Activated CD4-positive, alpha-beta T cell treated with anti-CD3 and anti-CD28 coated beads for 36 hours (primary cell): ENCODE measurements at regions of chr3 and their contacts with region 1.

Region 1: DNA sequence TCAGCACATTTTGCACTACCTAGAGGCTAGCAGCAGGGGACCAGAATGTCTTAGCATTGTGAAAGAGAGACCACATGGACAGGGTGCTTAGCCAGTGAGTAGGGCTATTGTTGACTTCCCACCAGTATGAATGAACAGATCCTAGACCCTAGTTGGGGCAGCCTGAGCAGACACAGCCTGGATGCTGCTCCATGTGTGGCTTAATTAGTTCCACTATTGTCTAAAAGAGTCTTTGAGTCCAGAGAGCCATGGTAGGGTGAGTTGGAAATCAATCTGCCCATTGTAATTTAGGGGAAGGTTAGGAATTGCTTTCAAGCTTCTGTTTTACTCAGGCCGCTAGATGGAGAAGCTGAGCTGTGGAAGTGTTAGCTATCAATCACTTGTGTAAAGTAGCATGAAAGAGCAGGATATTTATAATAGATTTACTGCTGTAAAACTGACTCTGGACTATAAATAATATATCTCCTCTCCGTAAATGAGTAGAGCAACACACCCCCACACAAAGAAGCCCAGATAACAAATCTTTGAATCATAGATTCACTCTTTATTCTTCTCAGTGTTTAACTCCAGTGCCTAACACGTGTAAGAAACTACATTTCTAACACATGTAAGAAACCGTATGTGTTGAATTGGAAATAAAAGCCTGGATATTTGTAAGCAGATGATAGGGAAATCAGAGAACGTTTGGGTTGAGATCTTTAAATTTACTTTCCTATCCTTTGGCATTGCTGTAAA is 4.1 kb upstream of the GCSAM start:
- DNase-seq: peak; percentile 68
- ATAC-seq: no peak
- H3K4me3 Mint-ChIP-seq: no peak overlapping the region
- H3K27ac Mint-ChIP-seq: no peak overlapping the region
- H3K4me1 Mint-ChIP-seq: peaks cover 65% of the 10 kb centered on the region
- H3K27me3 Mint-ChIP-seq: no peaks in the 10 kb centered on the region

Region 2: DNA sequence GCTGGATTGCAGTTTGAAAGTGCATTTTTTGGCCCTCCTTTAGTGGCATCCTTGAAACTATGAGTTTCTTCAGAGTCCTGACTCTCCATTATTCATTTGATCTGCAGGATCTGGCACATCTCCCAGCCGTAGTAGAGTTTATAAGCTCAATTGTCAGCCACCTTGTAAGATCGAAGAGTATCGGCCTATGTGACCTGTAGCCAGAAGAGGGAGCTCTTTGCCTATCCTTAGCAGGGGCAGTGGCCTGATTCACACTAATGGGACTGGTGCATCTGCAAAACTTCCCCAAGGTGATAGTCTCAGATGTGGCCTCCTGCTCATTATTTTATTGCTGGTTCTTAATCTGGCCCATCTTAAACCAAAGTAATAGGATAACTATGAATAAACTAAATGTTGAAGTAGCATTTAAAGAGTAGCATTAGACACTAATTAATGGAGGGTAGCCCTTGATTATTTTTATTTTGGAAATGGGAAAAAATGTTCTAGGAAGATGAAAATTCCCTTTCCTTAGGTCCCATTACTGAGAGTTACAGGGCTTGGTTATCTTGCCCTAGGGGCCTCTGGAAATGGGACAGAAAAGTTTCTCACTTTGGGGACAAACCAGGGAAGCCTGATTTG is 25.2 kb before region 1 on chr3:
- CTCF ChIA-PET with region 1: interaction called, 26 read pairs
- POLR2A ChIA-PET with region 1: no interaction called
- intact Hi-C with region 1: loop called in 1 of 2 experiments (anchors 1 kb)
- DNase-seq: peak; percentile 73
- ATAC-seq: peak; percentile 94
- H3K4me3 Mint-ChIP-seq: no peak overlapping the region
- H3K27ac Mint-ChIP-seq: no peak overlapping the region
- H3K4me1 Mint-ChIP-seq: peaks cover 12% of the 10 kb centered on the region
- H3K27me3 Mint-ChIP-seq: no peaks in the 10 kb centered on the region

Region 3: GRCh38 chr3:112303764-112304325 is 166.7 kb after region 1 on chr3:
- CTCF ChIA-PET with region 1: interaction called, 11 read pairs
- POLR2A ChIA-PET with region 1: no interaction called
- intact Hi-C with region 1: loop called in 1 of 2 experiments (anchors 5 kb)
- DNase-seq: no peak
- ATAC-seq: peak; percentile 45
- H3K4me3 Mint-ChIP-seq: no peak overlapping the region
- H3K27ac Mint-ChIP-seq: no peak overlapping the region
- H3K4me1 Mint-ChIP-seq: no peaks in the 10 kb centered on the region
- H3K27me3 Mint-ChIP-seq: no peaks in the 10 kb centered on the region

Region 4: DNA sequence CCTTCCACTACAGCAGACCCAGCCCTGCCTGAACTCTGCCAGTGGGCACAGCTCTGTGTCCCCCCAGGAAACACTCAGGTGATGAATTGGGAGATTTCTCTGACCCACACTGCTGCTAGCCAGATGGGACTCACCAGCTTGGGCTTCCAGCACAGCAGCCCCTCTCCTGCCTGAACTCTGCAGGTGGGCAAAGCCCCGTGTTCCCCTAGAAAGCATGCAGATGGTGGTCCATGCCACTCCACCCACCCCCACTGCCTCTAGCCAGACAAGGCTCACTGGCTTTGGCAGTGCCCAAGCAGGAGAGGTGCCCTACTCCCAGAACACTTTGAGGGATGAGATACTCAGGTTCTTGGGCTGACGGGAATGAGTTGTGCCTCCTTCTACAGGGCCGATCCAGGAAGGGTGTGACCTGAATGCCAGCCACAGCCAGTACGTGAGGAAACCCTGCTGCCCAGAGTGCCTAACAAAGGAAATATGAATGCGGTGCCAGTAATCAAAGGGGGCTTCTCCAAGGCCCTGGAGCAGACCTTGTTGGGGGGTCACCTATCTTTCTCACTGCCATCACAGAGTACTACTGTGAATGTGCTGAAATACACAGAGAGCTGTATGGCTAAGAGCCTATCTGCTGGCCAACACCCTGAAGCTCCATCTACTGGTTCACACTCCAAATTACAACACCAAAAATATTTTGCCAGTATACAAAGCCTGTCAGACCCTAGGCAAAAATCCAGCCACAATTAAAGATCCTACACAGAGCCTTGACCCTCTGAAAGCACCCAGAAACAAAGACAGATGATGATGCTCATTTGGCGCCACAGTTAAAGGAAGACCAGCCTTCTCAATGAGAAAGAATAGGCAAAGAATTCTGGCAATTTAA is 300.3 kb after region 1 on chr3:
- CTCF ChIA-PET with region 1: interaction called, 5 read pairs
- POLR2A ChIA-PET with region 1: no interaction called
- intact Hi-C with region 1: loop called in 1 of 2 experiments (anchors 1 kb)
- DNase-seq: peak; percentile 22
- ATAC-seq: peak; percentile 92
- H3K4me3 Mint-ChIP-seq: no peak overlapping the region
- H3K27ac Mint-ChIP-seq: peak overlapping the region; percentile 64
- H3K4me1 Mint-ChIP-seq: peaks cover 39% of the 10 kb centered on the region
- H3K27me3 Mint-ChIP-seq: no peaks in the 10 kb centered on the region

Region 5: GRCh38 chr3:112531358-112531781 is 394.2 kb after region 1 on chr3:
- CTCF ChIA-PET with region 1: interaction called, 3 read pairs
- POLR2A ChIA-PET with region 1: no interaction called
- intact Hi-C with region 1: loop called (anchors 5 kb)
- DNase-seq: no peak
- ATAC-seq: no peak
- H3K4me3 Mint-ChIP-seq: no peak overlapping the region
- H3K27ac Mint-ChIP-seq: no peak overlapping the region
- H3K4me1 Mint-ChIP-seq: peaks cover 10% of the 10 kb centered on the region
- H3K27me3 Mint-ChIP-seq: no peaks in the 10 kb centered on the region

Region 6: DNA sequence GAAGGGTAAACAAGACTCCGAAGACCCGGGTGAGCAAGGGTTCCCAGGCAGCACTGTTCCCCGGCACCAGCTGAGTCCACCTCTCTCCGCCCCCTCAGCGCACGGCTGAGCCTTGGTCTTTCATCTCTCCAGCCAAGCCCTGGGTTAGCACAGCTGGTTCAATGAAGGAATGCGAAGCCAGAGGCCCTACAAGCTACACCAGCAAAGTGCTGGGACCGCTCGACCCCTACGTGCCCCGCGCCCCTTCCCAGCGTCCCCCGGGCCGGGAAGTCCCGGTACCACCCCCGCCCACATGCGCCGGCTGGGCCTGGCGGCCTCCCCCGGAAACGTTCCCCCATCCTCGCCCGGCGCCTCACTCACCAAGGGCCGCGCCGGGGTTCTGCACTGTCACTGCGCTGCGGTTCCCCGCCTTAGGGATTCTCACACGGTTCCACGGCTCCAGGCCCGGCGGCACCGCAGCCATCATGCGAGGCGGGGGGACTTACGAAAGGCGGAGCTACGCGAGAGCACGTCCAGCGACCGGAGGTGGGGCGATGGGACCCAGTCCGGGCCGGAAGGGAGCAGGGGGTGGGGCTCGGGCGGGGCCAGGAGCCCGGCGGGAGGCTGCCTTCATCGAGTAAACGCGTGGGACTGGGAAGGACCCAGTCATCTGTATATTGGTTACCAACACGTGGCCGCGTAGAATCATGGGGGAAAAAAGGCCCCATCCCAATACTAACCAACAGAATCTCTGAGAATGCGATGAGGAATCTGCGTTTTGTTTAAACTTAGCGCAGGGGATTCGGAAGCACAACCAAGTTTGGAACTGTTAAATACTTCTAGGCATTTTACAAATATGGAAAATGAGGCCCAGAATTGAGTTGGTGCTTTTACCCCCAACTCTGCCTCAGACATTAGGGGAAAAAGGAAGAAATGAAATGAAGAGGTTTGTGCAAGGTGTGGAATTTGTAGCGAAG is 882.3 kb after region 1 on chr3:
- CTCF ChIA-PET with region 1: no interaction called
- POLR2A ChIA-PET with region 1: no interaction called
- intact Hi-C with region 1: loop called in 1 of 2 experiments (anchors 10 kb)
- DNase-seq: peak; percentile 96
- ATAC-seq: peak; percentile 90
- H3K4me3 Mint-ChIP-seq: peak overlapping the region; percentile 85
- H3K27ac Mint-ChIP-seq: peak overlapping the region; percentile 94
- H3K4me1 Mint-ChIP-seq: peaks cover 55% of the 10 kb centered on the region
- H3K27me3 Mint-ChIP-seq: no peaks in the 10 kb centered on the region